ENCODE measurements at regions of chr10 and their contacts with region 1.

Region 1: DNA sequence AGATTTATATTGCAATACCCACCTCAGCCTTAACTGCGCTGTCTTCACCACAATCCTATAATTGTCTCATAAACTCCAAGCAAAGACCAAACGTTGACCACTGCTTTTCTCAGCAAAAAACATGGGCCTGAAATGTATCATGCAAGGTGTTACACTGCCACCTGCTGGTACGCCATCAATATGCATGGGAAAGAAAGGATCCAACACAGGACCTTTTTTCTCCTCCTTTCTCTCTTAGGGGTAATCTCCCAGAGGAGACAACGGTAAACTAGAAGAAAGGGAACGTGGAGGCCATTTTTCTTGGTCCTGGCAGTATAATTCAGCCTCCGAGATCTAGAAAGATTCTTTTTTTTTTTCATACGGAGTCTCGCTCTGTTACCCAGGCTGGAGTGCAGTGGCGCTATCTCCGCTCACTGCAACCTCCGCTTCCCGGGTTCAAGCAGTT is 79.1 kb upstream of the MPP7 start:
- DNase-seq: peak; percentile 85
- H3K4me3 ChIP-seq: no peak overlapping the region
- H3K27ac ChIP-seq: no peak overlapping the region
- H3K4me1 ChIP-seq: no peaks in the 10 kb centered on the region
- H3K27me3 ChIP-seq: no peaks in the 10 kb centered on the region
- CTCF ChIP-seq: peak; percentile 95 to 99 (median 97)
- POLR2A ChIP-seq: no peak

Region 2: DNA sequence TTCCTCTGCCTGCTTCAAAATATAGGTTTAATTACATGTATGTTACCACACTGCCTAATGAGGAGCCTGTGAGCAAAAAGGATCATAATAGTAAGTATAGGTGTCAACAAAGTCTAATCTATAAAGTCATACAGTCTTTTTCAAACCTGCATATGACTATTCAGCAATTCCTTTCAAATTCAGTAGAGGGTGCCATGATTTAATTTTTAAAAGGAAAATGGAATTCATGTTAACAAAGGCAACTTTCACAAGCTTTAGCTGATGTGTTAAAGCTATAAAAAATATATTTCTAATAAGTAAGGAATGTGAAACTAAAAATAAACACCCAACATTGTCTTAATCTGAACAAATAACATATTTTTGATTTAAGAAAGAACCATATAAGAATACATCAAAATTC is 131.1 kb before region 1 on chr10:
- intact Hi-C with region 1: loop called (anchors 1 kb)
- DNase-seq: no peak
- H3K4me3 ChIP-seq: no peak overlapping the region
- H3K27ac ChIP-seq: no peak overlapping the region
- H3K4me1 ChIP-seq: no peaks in the 10 kb centered on the region
- H3K27me3 ChIP-seq: no peaks in the 10 kb centered on the region
- CTCF ChIP-seq: peak; percentile 19 to 74 (median 52)
- POLR2A ChIP-seq: no peak

Region 3: DNA sequence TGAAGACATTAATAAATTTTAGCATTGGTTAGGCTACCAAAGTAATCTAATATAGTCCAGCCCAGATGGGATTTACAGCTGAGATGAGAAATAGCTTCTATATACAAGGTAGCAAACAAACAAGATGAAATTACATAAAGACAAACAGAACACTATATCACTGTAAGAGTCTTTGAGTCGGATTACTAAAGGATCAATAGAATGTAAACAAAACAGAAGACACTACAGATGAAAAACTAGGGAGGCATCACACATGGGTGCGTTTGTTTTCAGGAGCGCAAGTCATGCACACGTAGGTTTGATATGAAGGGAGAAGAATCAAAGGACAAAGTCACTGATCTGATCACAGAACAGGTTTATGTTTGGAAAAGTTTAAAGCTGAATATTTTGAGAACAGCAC is 105.5 kb before region 1 on chr10:
- intact Hi-C with region 1: no loop called
- DNase-seq: no peak
- H3K4me3 ChIP-seq: no peak overlapping the region
- H3K27ac ChIP-seq: peak overlapping the region; percentile 7 to 40
- H3K4me1 ChIP-seq: no peaks in the 10 kb centered on the region
- H3K27me3 ChIP-seq: no peaks in the 10 kb centered on the region
- CTCF ChIP-seq: no peak
- POLR2A ChIP-seq: no peak

Region 4: DNA sequence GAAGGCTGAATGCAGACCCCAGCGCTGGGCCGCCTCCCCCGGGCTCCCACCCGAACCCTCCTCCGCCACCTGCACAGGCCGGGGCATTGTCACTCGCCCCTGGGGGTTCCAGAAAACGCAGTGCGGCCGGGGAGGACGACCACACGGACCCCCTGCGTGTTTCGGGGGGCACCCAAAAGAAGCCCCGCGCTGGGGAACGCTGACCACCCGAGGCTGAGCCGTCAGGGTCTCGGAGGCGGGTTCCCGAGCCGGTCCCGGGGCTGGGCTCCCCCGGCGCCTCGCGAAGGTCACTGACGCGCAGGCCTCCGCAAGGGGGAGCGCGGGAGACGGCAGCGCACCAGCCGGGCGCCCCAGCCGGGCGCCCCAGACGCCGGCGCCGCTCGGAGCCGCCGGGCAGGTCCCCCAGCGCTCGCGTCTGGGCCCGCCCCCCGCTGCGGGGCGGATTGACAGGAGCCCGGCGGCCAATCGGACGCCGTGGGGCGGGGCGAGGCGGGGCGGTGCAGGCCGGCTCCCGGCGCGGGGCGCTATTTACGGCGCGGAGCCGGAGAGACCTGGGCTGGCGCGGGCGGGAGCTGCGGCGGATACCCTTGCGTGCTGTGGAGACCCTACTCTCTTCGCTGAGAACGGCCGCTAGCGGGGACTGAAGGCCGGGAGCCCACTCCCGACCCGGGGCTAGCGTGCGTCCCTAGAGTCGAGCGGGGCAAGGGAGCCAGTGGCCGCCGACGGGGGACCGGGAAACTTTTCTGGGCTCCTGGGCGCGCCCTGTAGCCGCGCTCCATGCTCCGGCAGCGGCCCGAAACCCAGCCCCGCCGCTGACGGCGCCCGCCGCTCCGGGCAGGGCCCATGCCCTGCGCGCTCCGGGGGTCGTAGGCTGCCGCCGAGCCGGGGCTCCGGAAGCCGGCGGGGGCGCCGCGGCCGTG is 295.3 kb after region 1 on chr10 and contains the start of gene BAMBI:
- intact Hi-C with region 1: no loop called
- DNase-seq: peak; percentile 93
- H3K4me3 ChIP-seq: peak within 1 kb of the TSS; percentile 57 to 81
- H3K27ac ChIP-seq: peak within 1 kb of the TSS; percentile 33 to 50
- H3K4me1 ChIP-seq: no peaks in the 10 kb centered on the region
- H3K27me3 ChIP-seq: no peaks in the 10 kb centered on the region
- CTCF ChIP-seq: peak; percentile 56 to 90 (median 65)
- POLR2A ChIP-seq: peak; percentile 97
- total RNA-seq, gene BAMBI: 3.1 to 58.9 TPM